CD4-positive, alpha-beta T cell (primary cell): ENCODE measurements at regions of chr16 and their contacts with region 1.

Region 1: DNA sequence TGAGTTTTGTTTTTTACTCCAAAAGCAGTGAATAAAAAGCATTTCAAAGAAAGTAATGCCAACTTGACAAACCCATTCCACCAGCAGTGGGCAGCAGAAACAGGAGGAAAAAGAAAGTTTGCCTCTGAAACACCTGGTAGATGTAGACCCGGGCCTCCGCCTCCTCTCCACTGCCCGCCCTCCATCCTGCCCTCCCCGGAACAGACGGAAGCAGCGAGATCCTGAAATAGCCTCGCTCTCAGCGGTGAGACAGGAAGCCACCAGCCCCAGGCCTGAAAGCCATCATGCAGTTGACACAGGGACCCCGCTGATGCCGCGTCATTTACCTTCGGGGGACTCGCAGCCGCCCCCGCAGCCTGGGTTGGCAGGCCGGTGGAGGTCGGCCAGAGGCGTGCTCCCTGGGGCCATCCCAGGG is 67.8 kb downstream of the C16orf78 start:
- DNase-seq: peak; percentile 57 to 88 (median 76)
- ATAC-seq: peak; percentile 99
- H3K4me3 ChIP-seq: peak overlapping the region; percentile 23
- H3K4me3 Mint-ChIP-seq: peak overlapping the region; percentile 43
- H3K27ac ChIP-seq: peak overlapping the region; percentile 36 to 54
- H3K27ac Mint-ChIP-seq: peak overlapping the region; percentile 80
- H3K4me1 ChIP-seq: peaks cover 21% of the 10 kb centered on the region
- H3K4me1 Mint-ChIP-seq: peaks cover 32% of the 10 kb centered on the region
- H3K27me3 ChIP-seq: no peaks in the 10 kb centered on the region
- H3K27me3 Mint-ChIP-seq: no peaks in the 10 kb centered on the region
- CTCF ChIP-seq: peak; percentile 64

Region 2: DNA sequence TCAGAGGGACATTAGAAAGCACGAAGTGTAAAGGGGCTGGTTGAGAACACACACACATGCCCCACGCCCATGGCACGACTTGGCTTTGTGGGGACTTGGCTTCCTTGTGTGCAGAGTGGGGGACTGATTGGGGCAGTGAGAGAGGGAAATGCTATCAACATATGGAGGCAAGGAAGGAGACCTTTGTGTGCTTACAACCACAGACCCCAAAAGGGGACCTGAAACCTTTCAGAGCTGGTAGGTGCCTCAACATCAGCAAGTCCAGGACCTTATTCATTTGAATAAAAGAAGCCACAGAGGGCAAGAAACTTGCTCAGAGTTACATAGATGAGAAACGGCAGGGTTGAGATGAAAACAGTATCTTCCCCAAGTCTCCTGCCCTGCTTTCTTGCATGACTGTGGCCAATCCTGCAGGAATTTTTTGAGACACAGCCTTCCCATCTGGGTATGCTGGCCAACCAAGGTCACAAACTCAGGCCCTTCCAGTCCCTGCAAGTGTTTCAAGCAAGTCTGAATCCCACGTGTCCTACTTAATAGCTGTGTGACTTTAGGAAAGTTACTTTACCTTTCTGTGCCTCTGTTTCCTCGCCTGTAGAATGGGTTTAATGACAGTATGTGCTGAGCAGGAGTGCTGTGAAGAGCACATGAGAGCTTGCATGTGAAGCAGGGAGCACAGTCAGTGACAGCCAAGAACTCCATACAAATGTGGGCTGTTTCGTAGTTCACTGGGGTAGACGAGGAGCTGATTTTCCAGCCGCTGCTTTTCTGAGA is 41.6 kb before region 1 on chr16:
- CTCF ChIA-PET with region 1: no interaction called
- POLR2A ChIA-PET with region 1: no interaction called
- intact Hi-C with region 1: no loop called
- DNase-seq: no peak
- ATAC-seq: no peak
- H3K4me3 ChIP-seq: no peak overlapping the region
- H3K4me3 Mint-ChIP-seq: no peak overlapping the region
- H3K27ac ChIP-seq: no peak overlapping the region
- H3K27ac Mint-ChIP-seq: no peak overlapping the region
- H3K4me1 ChIP-seq: no peaks in the 10 kb centered on the region
- H3K4me1 Mint-ChIP-seq: no peaks in the 10 kb centered on the region
- H3K27me3 ChIP-seq: peaks cover 0 to 4% of the 10 kb centered on the region in 2 experiments
- H3K27me3 Mint-ChIP-seq: peaks cover 40% of the 10 kb centered on the region
- CTCF ChIP-seq: no peak

Region 3: GRCh38 chr16:49463529-49463928 is 22.2 kb after region 1 on chr16:
- CTCF ChIA-PET with region 1: interaction called, 3 read pairs
- POLR2A ChIA-PET with region 1: no interaction called
- intact Hi-C with region 1: loop called (anchors 1 to 2 kb)
- DNase-seq: peak; percentile 63 to 94 (median 74)
- ATAC-seq: peak; percentile 82
- H3K4me3 ChIP-seq: peak overlapping the region; percentile 13
- H3K4me3 Mint-ChIP-seq: peak overlapping the region; percentile 59
- H3K27ac ChIP-seq: peak overlapping the region; percentile 47 to 75
- H3K27ac Mint-ChIP-seq: peak overlapping the region; percentile 92
- H3K4me1 ChIP-seq: peaks cover 57% of the 10 kb centered on the region
- H3K4me1 Mint-ChIP-seq: peaks cover 67% of the 10 kb centered on the region
- H3K27me3 ChIP-seq: no peaks in the 10 kb centered on the region
- H3K27me3 Mint-ChIP-seq: no peaks in the 10 kb centered on the region
- CTCF ChIP-seq: no peak

Region 4: GRCh38 chr16:49491771-49492761 is 50.7 kb after region 1 on chr16:
- CTCF ChIA-PET with region 1: no interaction called
- POLR2A ChIA-PET with region 1: no interaction called
- intact Hi-C with region 1: loop called (anchors 2 kb)
- DNase-seq: peak in 12 of 14 experiments; percentile 12 to 70 (median 40)
- ATAC-seq: peak; percentile 78
- H3K4me3 ChIP-seq: no peak overlapping the region
- H3K4me3 Mint-ChIP-seq: no peak overlapping the region
- H3K27ac ChIP-seq: no peak overlapping the region
- H3K27ac Mint-ChIP-seq: no peak overlapping the region
- H3K4me1 ChIP-seq: peaks cover 8% of the 10 kb centered on the region
- H3K4me1 Mint-ChIP-seq: no peaks in the 10 kb centered on the region
- H3K27me3 ChIP-seq: no peaks in the 10 kb centered on the region
- H3K27me3 Mint-ChIP-seq: no peaks in the 10 kb centered on the region
- CTCF ChIP-seq: peak; percentile 89

Region 5: DNA sequence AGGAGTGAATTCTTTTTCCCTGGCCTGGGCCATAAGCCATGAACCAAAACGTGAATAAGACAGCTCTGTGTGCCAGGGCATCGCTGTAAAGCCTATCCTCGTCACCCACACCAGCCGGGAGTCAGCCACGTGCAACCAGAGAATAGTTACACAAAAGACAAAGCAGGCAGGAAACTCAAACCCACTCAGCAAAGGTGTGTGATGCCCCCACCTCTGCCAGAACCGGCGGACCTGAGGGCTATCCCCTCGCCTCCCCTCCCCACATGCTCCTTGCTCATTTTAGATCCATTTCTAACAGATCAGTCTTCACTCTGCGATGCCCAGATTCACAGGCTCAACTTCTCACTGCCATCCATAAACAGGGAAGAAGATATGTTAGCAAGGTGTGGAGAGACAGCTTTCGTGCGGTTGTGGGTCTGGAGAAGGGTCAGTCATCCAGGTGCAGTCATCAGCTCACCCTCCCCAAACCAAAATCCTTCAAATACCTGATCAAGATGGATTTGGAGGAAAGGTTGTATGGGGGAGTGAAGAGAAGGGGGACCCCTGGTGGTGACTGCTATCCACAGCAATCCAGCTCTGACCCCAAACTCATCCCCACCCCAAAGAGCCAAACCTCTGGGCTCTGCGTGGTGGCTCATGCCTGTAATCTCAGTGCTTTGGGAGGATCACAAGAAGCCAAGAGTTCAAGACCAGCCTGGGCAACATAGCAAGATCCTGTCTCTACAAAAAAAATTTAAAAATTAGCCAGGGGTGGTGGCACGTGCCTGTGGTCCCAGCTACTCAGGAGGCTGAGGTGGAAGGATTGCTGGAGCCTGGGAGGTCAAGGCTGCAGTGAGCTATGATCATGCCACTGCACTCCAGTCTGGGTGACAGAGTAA is 151.4 kb after region 1 on chr16:
- CTCF ChIA-PET with region 1: interaction called, 5 read pairs
- POLR2A ChIA-PET with region 1: no interaction called
- intact Hi-C with region 1: loop called (anchors 1 kb)
- DNase-seq: peak; percentile 6 to 74 (median 26)
- ATAC-seq: peak; percentile 74
- H3K4me3 ChIP-seq: no peak overlapping the region
- H3K4me3 Mint-ChIP-seq: no peak overlapping the region
- H3K27ac ChIP-seq: no peak overlapping the region
- H3K27ac Mint-ChIP-seq: no peak overlapping the region
- H3K4me1 ChIP-seq: peaks cover 7% of the 10 kb centered on the region
- H3K4me1 Mint-ChIP-seq: peaks cover 21% of the 10 kb centered on the region
- H3K27me3 ChIP-seq: peaks cover 3 to 9% of the 10 kb centered on the region in 2 experiments
- H3K27me3 Mint-ChIP-seq: peaks cover 5% of the 10 kb centered on the region
- CTCF ChIP-seq: peak; percentile 76

Region 6: DNA sequence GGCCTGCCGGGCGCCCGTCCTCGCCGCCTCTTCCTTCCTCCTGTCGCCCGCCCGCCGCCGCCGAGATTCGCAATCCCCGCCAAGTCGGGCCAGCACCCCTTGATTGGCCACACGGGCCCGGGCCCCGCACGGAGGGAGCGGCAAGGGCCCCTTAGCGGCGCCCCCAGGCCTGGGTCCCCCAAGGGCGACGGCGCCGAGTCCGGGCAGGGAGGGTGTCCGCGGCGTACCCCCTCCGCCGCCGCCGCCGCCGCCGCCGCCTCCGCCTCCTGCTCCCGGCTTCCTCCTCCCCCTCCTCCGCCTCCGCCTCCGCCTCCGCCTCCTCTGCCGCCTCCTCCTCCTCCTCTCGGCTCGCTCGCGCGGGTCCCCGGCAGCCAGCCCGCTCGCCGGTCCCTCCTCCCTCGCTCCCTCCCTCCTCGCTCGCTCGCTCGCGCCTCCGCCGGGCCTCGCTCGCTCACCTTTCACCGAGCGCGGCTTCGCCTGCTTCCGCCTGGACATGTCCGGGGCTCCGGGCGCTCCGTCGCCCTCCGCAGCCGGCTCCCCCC is 414.0 kb after region 1 on chr16:
- CTCF ChIA-PET with region 1: no interaction called
- POLR2A ChIA-PET with region 1: no interaction called
- intact Hi-C with region 1: loop called in 1 of 2 experiments (anchors 10 kb)
- DNase-seq: peak; percentile 38 to 78 (median 61)
- ATAC-seq: peak; percentile 62
- H3K4me3 ChIP-seq: peak overlapping the region; percentile 24
- H3K4me3 Mint-ChIP-seq: peak overlapping the region; percentile 30
- H3K27ac ChIP-seq: no peak overlapping the region
- H3K27ac Mint-ChIP-seq: no peak overlapping the region
- H3K4me1 ChIP-seq: peaks cover 38% of the 10 kb centered on the region
- H3K4me1 Mint-ChIP-seq: peaks cover 13% of the 10 kb centered on the region
- H3K27me3 ChIP-seq: peaks cover 38 to 56% of the 10 kb centered on the region in 2 experiments
- H3K27me3 Mint-ChIP-seq: peaks cover 53% of the 10 kb centered on the region
- CTCF ChIP-seq: no peak